ENCODE measurements at regions of chr19 and their contacts with region 1.

Region 1: DNA sequence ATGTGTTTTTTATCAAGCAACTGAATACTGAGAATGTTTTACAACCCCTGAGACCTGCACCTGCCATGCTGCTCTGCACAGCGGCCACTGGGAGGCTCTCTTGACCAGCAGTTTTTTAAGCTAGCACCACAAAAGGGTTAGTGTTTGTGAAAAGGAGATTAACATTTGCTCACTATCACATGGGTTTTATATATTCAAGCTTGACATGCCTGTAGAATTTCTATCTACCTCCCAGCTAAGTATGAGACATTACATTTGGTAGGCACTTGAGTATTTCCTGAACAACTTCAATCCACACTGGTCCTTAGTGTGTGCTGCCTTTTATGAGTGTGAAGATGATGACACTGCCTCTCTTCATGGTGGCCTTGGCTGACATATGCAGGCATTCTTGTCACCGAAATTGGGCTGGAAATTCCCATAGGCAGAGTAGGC is 1238.9 kb downstream of the UQCRFS1 start:
- ATAC-seq: peak; percentile 58 to 91 (median 72)
- H3K4me3 ChIP-seq: no peak overlapping the region
- H3K27ac ChIP-seq: no peak overlapping the region
- H3K4me1 ChIP-seq: peaks cover 0 to 6% of the 10 kb centered on the region in 2 donors

Region 2: DNA sequence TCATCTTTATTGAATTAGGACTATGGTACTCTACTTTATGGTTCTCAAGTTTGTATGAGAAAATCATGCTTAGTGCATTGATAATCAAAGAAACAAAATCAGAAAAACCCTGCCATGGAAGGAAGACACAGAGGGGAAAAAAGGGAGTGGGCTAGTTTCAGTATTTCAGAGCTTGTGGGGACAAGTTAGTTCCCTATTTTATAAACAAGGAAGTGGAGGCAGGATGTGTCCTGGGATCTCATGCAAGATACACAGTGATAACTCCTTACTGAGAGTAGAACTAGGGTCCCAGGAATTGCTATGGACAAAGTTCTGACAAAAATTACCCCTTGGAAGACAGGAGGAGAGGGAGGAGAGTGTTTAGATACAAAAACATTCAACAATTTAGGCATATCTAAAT is 38.4 kb before region 1 on chr19:
- in situ Hi-C with region 1: no loop called
- ATAC-seq: no peak
- H3K4me3 ChIP-seq: no peak overlapping the region
- H3K27ac ChIP-seq: no peak overlapping the region
- H3K4me1 ChIP-seq: peaks cover 0 to 8% of the 10 kb centered on the region in 2 donors

Region 3: GRCh38 chr19:28239270-28239669 is 265.2 kb after region 1 on chr19:
- in situ Hi-C with region 1: loop called in 1 of 9 experiments (anchors 10 kb)
- ATAC-seq: peak in 4 of 8 experiments; percentile 38 to 81 (median 52)
- H3K4me3 ChIP-seq: no peak overlapping the region
- H3K27ac ChIP-seq: no peak overlapping the region
- H3K4me1 ChIP-seq: peaks cover 3 to 18% of the 10 kb centered on the region in 2 donors

Region 4: DNA sequence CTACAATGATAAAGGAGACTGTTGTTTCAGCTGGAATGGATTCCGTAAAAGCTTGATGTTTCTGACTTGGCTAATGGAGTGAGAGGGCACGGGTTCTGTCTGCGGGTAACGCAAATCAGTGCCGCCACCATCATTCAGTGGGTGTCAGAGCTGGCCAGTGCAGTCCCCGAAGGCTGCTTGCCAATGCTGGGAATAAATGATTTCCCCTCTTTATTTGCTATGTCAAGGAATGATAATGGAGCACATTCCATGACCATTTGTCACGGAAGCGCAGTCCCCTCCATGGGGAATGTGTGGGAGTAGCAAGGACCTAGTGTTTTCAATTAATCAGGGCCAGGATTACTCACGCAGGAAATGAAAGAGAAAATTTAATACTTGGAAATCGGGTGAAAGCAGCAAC is 339.5 kb after region 1 on chr19:
- in situ Hi-C with region 1: loop called in 3 of 9 experiments (anchors 10 to 25 kb)
- ATAC-seq: peak; percentile 69 to 99 (median 96)
- H3K4me3 ChIP-seq: no peak overlapping the region
- H3K27ac ChIP-seq: peak overlapping the region in 1 of 2 donors; percentile 64
- H3K4me1 ChIP-seq: peaks cover 18 to 22% of the 10 kb centered on the region in 2 donors

Region 5: GRCh38 chr19:28324275-28325060 is 350.4 kb after region 1 on chr19:
- in situ Hi-C with region 1: loop called in 6 of 9 experiments (anchors 5 to 25 kb)
- ATAC-seq: no peak
- H3K4me3 ChIP-seq: no peak overlapping the region
- H3K27ac ChIP-seq: no peak overlapping the region
- H3K4me1 ChIP-seq: peaks cover 0 to 7% of the 10 kb centered on the region in 2 donors

Region 6: DNA sequence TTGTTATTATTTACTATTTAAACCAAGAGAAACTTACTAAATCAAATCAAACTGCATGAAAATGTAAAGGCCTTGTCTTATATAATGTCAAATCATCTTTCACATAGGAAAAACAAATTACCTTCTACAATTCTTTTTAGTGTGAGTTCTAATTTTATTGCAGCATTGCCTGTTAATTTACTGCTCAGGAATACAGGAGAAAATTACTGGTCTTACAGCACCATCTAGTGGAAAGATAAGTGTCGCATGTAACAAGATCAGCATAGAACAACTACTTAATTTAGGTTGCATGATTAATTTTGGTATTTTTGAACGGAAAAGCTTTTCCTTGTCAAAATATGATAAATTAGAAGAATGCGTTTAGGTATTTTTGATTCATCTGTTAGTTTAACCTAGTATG is 736.2 kb after region 1 on chr19:
- in situ Hi-C with region 1: loop called in 3 of 9 experiments (anchors 25 kb)
- ATAC-seq: peak; percentile 50 to 78 (median 58)
- H3K4me3 ChIP-seq: no peak overlapping the region
- H3K27ac ChIP-seq: no peak overlapping the region
- H3K4me1 ChIP-seq: peaks cover 10 to 19% of the 10 kb centered on the region in 2 donors

Region 7: DNA sequence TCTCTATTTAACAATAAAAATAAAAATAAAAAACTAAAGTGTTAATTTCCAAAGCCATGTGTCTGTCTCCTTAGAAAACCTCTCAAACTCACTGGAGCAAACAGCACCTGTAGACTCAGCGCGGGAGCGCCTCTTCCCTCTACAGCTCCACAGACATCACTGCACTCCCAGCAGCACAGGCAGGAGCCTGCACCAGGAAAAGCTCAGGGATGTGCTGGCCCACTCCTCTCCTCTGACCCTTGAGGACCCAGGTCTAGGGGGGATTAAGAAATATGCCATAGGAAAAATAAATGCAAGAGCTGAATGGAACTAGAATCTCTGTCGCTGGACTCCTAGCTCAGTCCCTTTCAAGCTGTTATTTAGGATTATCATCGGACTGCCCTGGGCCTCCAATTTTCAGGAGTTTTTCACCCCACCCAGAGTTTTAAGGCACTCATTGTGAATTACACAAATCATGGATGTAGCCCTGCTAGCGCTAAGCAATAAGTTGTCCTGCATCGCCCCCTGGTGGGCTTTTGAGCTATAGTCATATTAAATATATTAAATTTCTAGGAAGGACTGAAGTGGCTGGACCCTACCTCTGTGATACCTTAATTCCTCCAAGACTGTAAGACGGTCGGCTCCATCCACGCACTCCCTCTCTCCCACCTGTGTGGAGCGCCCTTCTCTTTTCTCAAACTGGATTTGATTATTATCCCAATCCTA is 904.9 kb after region 1 on chr19:
- in situ Hi-C with region 1: loop called in 1 of 9 experiments (anchors 25 kb)
- ATAC-seq: peak; percentile 58 to 92 (median 72)
- H3K4me3 ChIP-seq: no peak overlapping the region
- H3K27ac ChIP-seq: no peak overlapping the region
- H3K4me1 ChIP-seq: peaks cover 37 to 46% of the 10 kb centered on the region in 2 donors